ENCODE measurements at regions of chr12 and their contacts with region 1.

Region 1: DNA sequence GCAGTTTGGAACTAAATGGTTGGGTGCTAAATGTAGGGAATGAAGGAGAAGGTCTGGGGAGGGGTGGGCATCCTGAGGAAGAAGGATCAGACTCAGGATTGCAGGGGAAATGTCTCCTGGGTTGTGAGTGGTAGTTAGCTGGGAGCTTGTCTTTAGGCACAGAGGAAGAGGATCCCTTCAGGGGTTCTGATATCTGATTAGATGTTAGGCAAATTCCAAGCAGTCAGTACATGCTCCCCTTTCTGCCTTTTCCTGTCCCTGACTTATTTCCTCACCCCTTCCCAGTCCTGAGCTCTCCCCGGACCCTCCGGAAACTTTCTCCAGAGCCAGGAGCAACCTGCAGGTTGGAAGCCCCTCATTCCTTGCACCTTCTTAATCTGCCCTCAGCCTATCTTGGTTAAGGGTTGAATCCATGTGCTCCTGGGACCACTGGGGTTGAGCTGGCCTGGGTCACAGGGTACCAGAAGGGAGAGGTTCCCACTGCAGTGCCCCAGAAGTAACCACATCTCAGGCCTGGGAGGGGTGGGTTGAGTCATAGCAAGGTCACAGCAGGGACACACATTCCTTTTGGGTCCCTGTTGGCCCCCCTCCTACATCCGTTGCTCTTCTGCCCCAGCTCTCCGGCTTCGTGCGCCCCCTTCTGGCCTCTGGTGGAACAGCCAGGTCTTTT is 1.6 kb downstream of the IGFBP6 start:
- DNase-seq: peak; percentile 93
- ATAC-seq: peak; percentile 47
- H3K4me3 Mint-ChIP-seq: peak overlapping the region; percentile 72
- H3K27ac Mint-ChIP-seq: peak overlapping the region; percentile 80
- H3K4me1 Mint-ChIP-seq: peaks cover 56% of the 10 kb centered on the region
- H3K27me3 Mint-ChIP-seq: peaks cover 4% of the 10 kb centered on the region

Region 2: GRCh38 chr12:53047221-53048042 is 51.7 kb before region 1 on chr12:
- CTCF ChIA-PET with region 1: interaction called, 55 read pairs
- DNase-seq: peak; percentile 66
- ATAC-seq: peak; percentile 84
- H3K4me3 Mint-ChIP-seq: peak overlapping the region; percentile 83
- H3K27ac Mint-ChIP-seq: no peak overlapping the region
- H3K4me1 Mint-ChIP-seq: peaks cover 17% of the 10 kb centered on the region
- H3K27me3 Mint-ChIP-seq: peaks cover 11% of the 10 kb centered on the region

Region 3: GRCh38 chr12:53054112-53054833 is 44.8 kb before region 1 on chr12:
- CTCF ChIA-PET with region 1: interaction called, 55 read pairs
- DNase-seq: peak; percentile 95
- ATAC-seq: peak; percentile 94
- H3K4me3 Mint-ChIP-seq: peak overlapping the region; percentile 92
- H3K27ac Mint-ChIP-seq: peak overlapping the region; percentile 86
- H3K4me1 Mint-ChIP-seq: peaks cover 24% of the 10 kb centered on the region
- H3K27me3 Mint-ChIP-seq: no peaks in the 10 kb centered on the region

Region 4: DNA sequence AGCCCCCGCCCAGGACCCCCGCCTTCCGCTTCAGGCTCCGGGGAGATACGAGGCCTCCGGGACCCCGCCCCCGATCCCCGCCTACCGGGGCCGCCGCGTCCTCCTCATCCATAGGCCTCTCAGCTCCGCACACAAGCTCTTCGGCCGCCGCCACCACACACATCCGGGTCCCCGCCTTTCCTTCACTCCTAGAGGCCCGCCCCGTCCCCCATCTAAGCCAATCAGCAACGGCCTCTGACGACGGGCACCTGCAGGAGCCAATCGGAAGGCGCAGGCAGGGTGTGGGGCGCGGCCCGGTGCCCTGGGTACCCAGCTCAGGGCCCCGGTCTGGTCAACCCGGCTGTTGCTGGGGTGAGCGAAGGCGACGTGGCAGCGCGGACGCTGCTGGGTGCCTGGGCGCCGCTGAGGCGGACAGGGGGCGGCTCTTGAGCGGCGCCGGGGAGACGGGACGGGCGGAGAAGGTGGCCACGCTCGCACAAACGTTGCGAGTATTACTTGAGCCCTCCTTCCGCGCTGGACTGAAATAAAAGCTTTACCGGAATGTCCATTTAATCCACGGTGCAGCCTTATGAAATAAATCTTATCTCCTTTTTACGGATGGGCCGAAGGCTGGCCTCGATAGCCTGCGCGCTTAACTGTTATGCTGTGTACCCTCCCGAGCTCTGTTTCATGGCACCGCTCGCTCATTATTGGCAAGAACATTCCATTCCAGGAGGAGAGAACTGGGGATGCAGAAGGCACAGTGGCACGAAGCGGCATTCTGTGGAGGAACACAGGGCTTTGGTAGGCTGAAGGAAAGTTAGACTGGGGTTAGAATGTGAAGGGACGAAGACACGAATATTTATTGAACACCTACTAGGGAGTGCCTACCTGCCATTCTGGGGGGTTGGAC is 19.6 kb before region 1 on chr12 and contains the start of gene SPRYD3:
- CTCF ChIA-PET with region 1: interaction called, 40 read pairs
- DNase-seq: peak; percentile 97
- ATAC-seq: peak; percentile 97
- H3K4me3 Mint-ChIP-seq: peak within 1 kb of the TSS; percentile 80
- H3K27ac Mint-ChIP-seq: peak within 1 kb of the TSS; percentile 88
- H3K4me1 Mint-ChIP-seq: peaks cover 31% of the 10 kb centered on the region
- H3K27me3 Mint-ChIP-seq: no peaks in the 10 kb centered on the region
- total RNA-seq, gene SPRYD3: 27.8 to 29.7 TPM

Measured in activated CD8-positive, alpha-beta memory T cell treated with anti-CD3 and anti-CD28 coated beads, Interleukin-2, amount 10 ng/mL, durations not matched to agents 7 days and 5 days (primary cell).